Activated CD8-positive, alpha-beta T cell treated with anti-CD3 and anti-CD28 coated beads, Interleukin-2, amount 10 ng/mL, durations not matched to agents 7 days and 5 days (primary cell): ENCODE measurements at regions of chr20 and their contacts with region 1.

Region 1: DNA sequence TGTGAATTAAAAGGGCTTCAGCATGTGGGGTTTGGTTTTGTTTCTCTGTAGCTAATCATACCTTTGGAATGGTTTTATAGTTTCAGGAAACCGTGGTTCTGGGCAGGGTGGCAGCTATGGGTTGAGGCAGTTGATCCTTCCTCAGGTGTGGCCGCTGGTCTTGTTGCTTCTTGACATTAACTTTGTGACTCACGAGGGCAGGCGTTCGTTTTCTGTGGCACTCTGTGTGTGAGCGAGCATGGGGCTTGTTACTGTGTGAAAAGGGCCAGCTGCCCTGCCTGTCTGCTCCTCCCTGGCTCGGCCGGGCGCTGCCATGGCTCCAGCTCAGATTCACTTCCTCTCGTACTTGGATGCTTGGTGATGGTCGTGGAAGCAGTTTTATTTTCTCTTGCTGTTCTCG is 16.2 kb downstream of the DNAJC5 start:
- DNase-seq: no peak
- ATAC-seq: no peak
- H3K4me3 Mint-ChIP-seq: no peak overlapping the region
- H3K27ac Mint-ChIP-seq: peak overlapping the region; percentile 11
- H3K4me1 Mint-ChIP-seq: peaks cover 27% of the 10 kb centered on the region
- H3K27me3 Mint-ChIP-seq: no peaks in the 10 kb centered on the region

Region 2: GRCh38 chr20:63864847-63865640 is 46.1 kb before region 1 on chr20 and contains the start of gene TPD52L2:
- CTCF ChIA-PET with region 1: no interaction called
- POLR2A ChIA-PET with region 1: no interaction called
- DNase-seq: peak; percentile 99
- ATAC-seq: peak; percentile 90
- H3K4me3 Mint-ChIP-seq: peak within 1 kb of the TSS; percentile 94
- H3K27ac Mint-ChIP-seq: peak within 1 kb of the TSS; percentile 96
- H3K4me1 Mint-ChIP-seq: peaks cover 22% of the 10 kb centered on the region
- H3K27me3 Mint-ChIP-seq: no peaks in the 10 kb centered on the region
- total RNA-seq, gene TPD52L2: 35.7 to 40.0 TPM

Region 3: GRCh38 chr20:63973636-63974402 is 62.6 kb after region 1 on chr20:
- CTCF ChIA-PET with region 1: interaction called, 12 read pairs
- POLR2A ChIA-PET with region 1: no interaction called
- DNase-seq: peak; percentile 79
- ATAC-seq: peak; percentile 54
- H3K4me3 Mint-ChIP-seq: no peak overlapping the region
- H3K27ac Mint-ChIP-seq: no peak overlapping the region
- H3K4me1 Mint-ChIP-seq: peaks cover 52% of the 10 kb centered on the region
- H3K27me3 Mint-ChIP-seq: no peaks in the 10 kb centered on the region